ENCODE measurements at regions of chr15 and their contacts with region 1.

Region 1: GRCh38 chr15:38647683-38648082 is 83.1 kb upstream of the RASGRP1 start:
- DNase-seq: no peak
- H3K4me3 Mint-ChIP-seq: no peak overlapping the region
- H3K27ac Mint-ChIP-seq: no peak overlapping the region
- H3K4me1 Mint-ChIP-seq: peaks cover 63% of the 10 kb centered on the region
- H3K27me3 Mint-ChIP-seq: no peaks in the 10 kb centered on the region

Region 2: GRCh38 chr15:38576837-38577236 is 70.8 kb before region 1 on chr15:
- CTCF ChIA-PET with region 1: no interaction called
- POLR2A ChIA-PET with region 1: interaction called, 10 read pairs
- DNase-seq: no peak
- H3K4me3 Mint-ChIP-seq: no peak overlapping the region
- H3K27ac Mint-ChIP-seq: no peak overlapping the region
- H3K4me1 Mint-ChIP-seq: peaks cover 20% of the 10 kb centered on the region
- H3K27me3 Mint-ChIP-seq: no peaks in the 10 kb centered on the region

Region 3: DNA sequence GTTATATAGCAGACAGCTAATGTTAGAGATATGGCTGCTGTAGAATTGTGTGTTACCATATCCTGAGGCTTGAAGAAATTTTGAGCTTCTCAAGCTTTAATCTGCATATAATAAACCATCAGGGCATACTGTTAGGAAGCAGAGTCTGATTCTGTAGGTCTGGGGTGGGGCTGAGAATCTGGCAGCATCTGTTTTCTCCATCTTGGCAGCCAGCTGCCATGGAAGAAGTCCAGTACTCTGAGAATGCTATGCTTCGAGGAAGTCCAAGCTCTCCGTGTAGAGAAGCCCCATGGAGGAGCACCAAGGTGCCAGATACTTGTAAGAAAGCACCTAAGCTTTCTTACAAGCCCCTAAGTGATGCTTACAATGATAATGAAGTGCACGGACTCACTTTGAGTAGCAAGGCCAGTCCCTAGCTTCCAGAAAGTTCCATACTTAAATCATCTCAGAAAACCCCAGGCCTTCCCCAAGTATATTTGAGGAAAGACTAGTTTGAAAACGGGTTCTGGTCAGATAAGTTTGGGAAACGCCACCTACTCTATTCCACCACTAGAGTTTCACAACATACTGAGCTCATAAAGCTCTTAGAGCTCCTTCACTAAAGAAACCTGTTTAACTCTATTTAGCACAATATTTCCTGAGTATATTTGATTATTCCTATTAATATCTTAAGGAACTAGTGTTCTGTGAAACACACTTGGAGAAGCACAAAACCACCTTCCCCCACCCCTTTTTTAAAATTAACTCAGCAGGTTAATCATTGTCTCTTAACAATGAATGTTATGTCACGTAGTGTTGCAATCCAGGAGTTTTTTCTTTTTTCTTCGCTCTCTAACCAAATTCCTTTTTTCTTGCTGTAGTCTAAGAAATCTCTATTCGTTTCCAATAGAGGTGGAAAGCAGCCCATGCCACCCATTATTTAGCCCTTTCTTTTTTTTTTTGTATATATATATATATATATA is 23.2 kb before region 1 on chr15:
- CTCF ChIA-PET with region 1: interaction called, 14 read pairs
- POLR2A ChIA-PET with region 1: interaction called, 55 read pairs
- DNase-seq: no peak
- H3K4me3 Mint-ChIP-seq: no peak overlapping the region
- H3K27ac Mint-ChIP-seq: no peak overlapping the region
- H3K4me1 Mint-ChIP-seq: peaks cover 25% of the 10 kb centered on the region
- H3K27me3 Mint-ChIP-seq: no peaks in the 10 kb centered on the region

Region 4: GRCh38 chr15:38660738-38661137 is 13.1 kb after region 1 on chr15:
- CTCF ChIA-PET with region 1: interaction called, 23 read pairs
- POLR2A ChIA-PET with region 1: interaction called, 497 read pairs
- DNase-seq: peak; percentile 37
- H3K4me3 Mint-ChIP-seq: peak overlapping the region; percentile 26
- H3K27ac Mint-ChIP-seq: peak overlapping the region; percentile 61
- H3K4me1 Mint-ChIP-seq: peaks cover 62% of the 10 kb centered on the region
- H3K27me3 Mint-ChIP-seq: no peaks in the 10 kb centered on the region

Region 5: DNA sequence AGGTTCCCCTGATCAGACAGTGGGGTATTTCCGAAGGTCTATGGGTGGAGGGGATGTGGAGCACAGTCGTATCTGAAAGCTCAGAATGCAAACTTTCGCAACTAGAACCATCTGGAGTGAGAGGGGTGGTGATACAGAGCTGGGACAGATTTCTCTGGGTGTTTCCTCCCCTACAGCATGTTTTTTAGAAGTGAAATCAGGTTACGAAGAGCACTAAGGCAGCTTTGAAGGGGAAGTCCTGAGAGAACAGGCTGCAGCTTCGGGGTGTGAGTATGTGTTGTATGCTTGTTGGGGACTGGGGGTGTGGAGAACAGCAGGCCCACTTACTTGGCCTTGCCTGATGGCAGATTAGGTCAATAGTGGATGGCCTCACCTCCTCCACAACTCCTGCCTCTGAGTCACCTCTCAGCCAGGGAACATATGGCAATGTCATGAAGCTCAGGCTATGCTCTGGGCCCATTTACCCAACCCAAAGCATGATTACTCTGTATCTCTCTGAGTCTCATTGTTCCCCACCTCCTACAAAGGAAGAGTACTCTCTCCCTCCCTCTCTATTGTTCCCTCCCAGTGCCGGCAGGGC is 24.1 kb after region 1 on chr15:
- CTCF ChIA-PET with region 1: interaction called, 64 read pairs
- POLR2A ChIA-PET with region 1: interaction called, 497 read pairs
- DNase-seq: peak; percentile 52
- H3K4me3 Mint-ChIP-seq: peak overlapping the region; percentile 56
- H3K27ac Mint-ChIP-seq: peak overlapping the region; percentile 97
- H3K4me1 Mint-ChIP-seq: peaks cover 81% of the 10 kb centered on the region
- H3K27me3 Mint-ChIP-seq: no peaks in the 10 kb centered on the region

Region 6: DNA sequence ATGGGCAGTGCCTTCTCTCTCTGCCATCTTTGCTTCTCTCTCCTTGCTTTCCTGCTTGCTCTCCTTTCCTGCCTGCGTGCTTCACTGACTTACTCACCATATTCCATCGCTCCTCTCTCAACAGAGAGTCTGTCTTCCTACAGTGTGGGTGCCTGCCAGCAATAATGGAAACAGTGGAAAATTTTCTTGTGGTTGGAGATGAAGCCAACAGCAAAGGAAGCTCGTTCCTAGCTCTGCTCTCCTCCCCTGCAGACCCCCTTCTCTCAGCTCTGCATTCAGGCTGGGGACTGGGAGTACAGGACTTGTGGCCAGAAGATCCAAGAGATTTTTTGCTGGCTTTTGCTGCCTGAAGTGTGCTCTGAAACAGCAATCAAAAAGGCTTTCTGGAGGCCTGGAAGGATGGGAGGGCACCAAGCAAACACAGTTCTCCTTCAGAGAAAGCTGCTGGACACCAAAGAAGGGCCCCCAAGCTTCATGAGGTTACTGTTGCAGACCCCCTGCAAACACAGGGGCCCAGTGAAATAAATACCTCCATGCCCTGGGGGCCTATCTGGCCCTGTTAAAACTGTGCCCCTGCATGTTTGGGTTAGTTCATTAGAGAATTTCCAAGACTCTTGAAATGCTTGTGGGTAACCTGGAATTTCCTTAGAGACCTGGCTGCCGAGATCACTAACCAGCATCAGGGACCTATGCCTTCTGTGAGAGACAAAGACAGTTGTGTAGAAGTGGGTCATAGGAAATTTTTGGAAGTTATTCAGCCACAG is 66.8 kb after region 1 on chr15:
- CTCF ChIA-PET with region 1: no interaction called
- POLR2A ChIA-PET with region 1: no interaction called
- DNase-seq: no peak
- H3K4me3 Mint-ChIP-seq: no peak overlapping the region
- H3K27ac Mint-ChIP-seq: no peak overlapping the region
- H3K4me1 Mint-ChIP-seq: no peaks in the 10 kb centered on the region
- H3K27me3 Mint-ChIP-seq: no peaks in the 10 kb centered on the region